ENCODE measurements at regions of chr9 and their contacts with region 1.

Region 1: DNA sequence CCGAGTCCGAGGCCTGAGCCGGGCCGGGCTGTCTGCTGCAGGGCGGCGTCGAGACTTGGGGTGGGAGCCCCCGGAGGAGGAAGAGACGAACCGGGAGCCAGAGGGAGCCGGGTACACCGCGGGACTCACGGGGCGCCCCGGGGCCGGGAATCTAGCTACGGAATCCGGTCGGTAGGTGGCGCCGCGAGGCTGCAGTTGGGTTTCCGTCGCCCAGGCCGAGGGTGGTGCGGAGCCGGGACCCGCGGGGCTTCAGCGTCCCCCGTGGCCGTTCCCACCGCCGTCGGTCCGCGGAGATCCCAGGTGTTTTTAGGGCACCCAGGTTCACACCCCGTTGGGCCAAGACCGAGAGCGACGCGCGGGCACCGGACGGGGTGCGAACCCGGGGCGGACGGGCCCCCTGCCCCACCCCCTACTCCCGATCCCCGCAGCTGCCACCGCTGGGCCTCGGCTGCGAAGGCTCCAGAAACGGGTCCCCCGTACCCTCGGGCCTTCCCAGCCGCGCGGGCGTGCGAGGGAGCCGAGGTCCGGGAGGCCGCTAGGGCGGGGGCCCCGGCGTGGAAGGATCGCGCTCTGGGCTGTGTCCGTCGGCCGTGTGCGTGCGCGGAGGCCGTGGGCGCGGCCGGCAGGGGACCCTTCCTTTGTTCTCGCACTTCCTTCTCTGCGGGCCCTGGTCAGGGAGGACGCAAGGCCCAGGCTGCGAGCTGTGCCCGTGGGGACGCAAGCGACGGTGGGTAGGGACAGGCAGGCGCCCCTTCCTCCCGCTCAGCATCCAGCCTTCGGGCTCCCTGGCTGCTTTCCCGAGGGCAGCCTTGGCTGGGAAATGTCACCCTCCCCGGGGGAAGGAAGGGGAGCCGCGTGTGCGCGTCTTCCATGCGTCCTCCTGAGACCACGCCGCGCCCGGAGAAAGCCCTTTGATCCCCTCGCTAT is 146.6 kb downstream of the GAPVD1 start:
- DNase-seq: peak; percentile 48 to 76 (median 64)
- H3K4me3 ChIP-seq: peak overlapping the region; percentile 49
- H3K4me3 Mint-ChIP-seq: peak overlapping the region in 6 of 7 donors; percentile 44 to 79 (median 70)
- H3K27ac ChIP-seq: no peak overlapping the region
- H3K27ac Mint-ChIP-seq: no peak overlapping the region
- H3K4me1 ChIP-seq: no peaks in the 10 kb centered on the region
- H3K4me1 Mint-ChIP-seq: peaks cover 6 to 16% (median 7%) of the 10 kb centered on the region in 3 donors
- H3K27me3 ChIP-seq: no peaks in the 10 kb centered on the region
- H3K27me3 Mint-ChIP-seq: peaks cover 8 to 36% of the 10 kb centered on the region in 2 donors

Region 2: DNA sequence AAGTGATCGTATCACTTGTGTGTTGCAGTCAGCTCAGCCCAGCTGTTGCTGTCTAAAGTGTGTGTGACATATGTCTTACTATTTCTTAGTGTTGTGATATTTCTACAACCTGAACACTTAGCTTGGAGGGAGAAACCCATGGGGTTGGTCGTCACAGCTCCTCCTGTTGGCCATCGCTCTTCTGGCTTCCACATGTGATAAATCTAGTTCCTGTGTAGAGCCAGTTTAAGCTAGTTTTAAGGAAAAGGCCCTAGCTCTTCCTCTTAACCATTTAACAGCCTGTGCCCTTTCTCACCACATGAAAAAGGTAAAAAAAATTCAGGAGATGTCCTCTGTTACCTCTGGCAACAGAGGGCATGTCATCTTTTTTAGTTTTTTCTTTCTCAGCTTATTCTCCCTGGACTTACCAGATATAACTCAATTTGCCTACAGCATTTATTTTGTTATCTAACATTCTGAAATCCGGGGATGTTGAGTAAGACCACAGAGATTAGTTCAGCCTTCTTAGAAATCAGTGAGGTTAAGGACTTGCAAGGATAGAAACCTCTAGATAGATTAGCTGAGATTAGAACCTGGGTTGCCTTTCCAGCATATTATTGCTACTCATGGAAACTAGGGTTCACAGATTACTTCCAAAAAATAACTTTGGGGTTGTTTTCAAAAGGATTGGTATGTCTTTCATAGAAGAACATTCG is 46.3 kb before region 1 on chr9:
- CTCF ChIA-PET with region 1: no interaction called
- POLR2A ChIA-PET with region 1: no interaction called
- DNase-seq: no peak
- H3K4me3 ChIP-seq: no peak overlapping the region
- H3K4me3 Mint-ChIP-seq: no peak overlapping the region
- H3K27ac ChIP-seq: no peak overlapping the region
- H3K27ac Mint-ChIP-seq: peak overlapping the region in 5 of 8 donors; percentile 12 to 61 (median 54)
- H3K4me1 ChIP-seq: no peaks in the 10 kb centered on the region
- H3K4me1 Mint-ChIP-seq: no peaks in the 10 kb centered on the region
- H3K27me3 ChIP-seq: no peaks in the 10 kb centered on the region
- H3K27me3 Mint-ChIP-seq: no peaks in the 10 kb centered on the region

Region 3: GRCh38 chr9:125421591-125422181 is 13.4 kb after region 1 on chr9:
- CTCF ChIA-PET with region 1: interaction called, 10 read pairs
- POLR2A ChIA-PET with region 1: no interaction called
- DNase-seq: no peak
- H3K4me3 ChIP-seq: no peak overlapping the region
- H3K4me3 Mint-ChIP-seq: no peak overlapping the region
- H3K27ac ChIP-seq: no peak overlapping the region
- H3K27ac Mint-ChIP-seq: no peak overlapping the region
- H3K4me1 ChIP-seq: no peaks in the 10 kb centered on the region
- H3K4me1 Mint-ChIP-seq: no peaks in the 10 kb centered on the region
- H3K27me3 ChIP-seq: no peaks in the 10 kb centered on the region
- H3K27me3 Mint-ChIP-seq: peaks cover 0 to 3% of the 10 kb centered on the region in 2 donors

Region 4: GRCh38 chr9:125476645-125477044 is 68.4 kb after region 1 on chr9:
- CTCF ChIA-PET with region 1: no interaction called
- POLR2A ChIA-PET with region 1: no interaction called
- DNase-seq: no peak
- H3K4me3 ChIP-seq: no peak overlapping the region
- H3K4me3 Mint-ChIP-seq: no peak overlapping the region
- H3K27ac ChIP-seq: peak overlapping the region; percentile 17
- H3K27ac Mint-ChIP-seq: no peak overlapping the region
- H3K4me1 ChIP-seq: no peaks in the 10 kb centered on the region
- H3K4me1 Mint-ChIP-seq: no peaks in the 10 kb centered on the region
- H3K27me3 ChIP-seq: no peaks in the 10 kb centered on the region
- H3K27me3 Mint-ChIP-seq: no peaks in the 10 kb centered on the region

Region 5: GRCh38 chr9:126228781-126229444 is 820.7 kb after region 1 on chr9:
- CTCF ChIA-PET with region 1: interaction called, 22 read pairs
- POLR2A ChIA-PET with region 1: no interaction called
- DNase-seq: peak; percentile 25 to 68 (median 44)
- H3K4me3 ChIP-seq: no peak overlapping the region
- H3K4me3 Mint-ChIP-seq: no peak overlapping the region
- H3K27ac ChIP-seq: no peak overlapping the region
- H3K27ac Mint-ChIP-seq: no peak overlapping the region
- H3K4me1 ChIP-seq: no peaks in the 10 kb centered on the region
- H3K4me1 Mint-ChIP-seq: peaks cover 3 to 6% (median 5%) of the 10 kb centered on the region in 3 donors
- H3K27me3 ChIP-seq: peaks cover 4% of the 10 kb centered on the region
- H3K27me3 Mint-ChIP-seq: peaks cover 16 to 63% of the 10 kb centered on the region in 2 donors